Activated CD4-positive, alpha-beta T cell treated with anti-CD3 and anti-CD28 coated beads for 36 hours (primary cell): ENCODE measurements at regions of chr17 and their contacts with region 1.

Region 1: DNA sequence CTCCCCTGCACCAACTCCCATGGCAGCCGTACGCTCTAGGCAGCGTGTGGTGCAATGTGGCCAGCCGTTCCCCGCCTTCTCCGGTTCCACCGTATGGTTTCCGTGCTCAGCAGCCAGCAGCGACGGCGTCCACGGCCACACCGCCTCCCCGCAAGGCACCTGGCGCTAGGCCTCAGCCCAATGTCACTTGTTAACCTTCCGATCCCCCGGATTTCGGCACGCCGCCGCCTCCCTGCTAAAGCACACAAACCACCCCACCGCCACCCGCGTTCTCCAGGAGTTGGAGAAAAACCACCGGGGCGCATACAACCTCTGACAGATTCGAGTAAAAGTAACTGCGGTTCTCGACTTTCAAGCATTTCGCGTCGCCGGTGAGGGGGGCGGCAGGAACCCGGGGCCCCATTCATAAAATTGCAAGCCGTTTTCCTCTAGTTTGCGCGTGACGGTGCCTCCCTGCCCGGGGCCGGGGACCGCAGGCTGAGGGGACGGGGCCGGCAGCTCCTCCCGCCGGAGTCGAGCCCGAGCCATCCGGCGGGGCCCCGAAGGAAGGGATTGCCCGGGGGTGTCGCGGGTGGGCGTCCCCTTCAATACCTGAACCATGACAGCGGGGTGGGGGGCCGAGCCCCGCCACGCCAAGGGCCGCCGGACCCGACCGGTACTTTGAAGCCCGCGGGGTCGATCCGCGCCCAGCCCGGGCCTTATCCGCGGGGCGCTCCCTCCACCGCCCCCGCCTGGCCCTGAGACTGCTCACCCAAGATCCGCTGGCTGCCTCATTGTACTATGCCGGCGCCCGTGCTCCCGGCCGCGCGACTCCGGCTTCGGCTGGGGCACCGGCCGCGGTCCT is at the start of gene TEX2:
- DNase-seq: peak; percentile 78
- ATAC-seq: peak; percentile 27
- H3K4me3 Mint-ChIP-seq: peak within 1 kb of the TSS; percentile 96
- H3K27ac Mint-ChIP-seq: peak within 1 kb of the TSS; percentile 92
- H3K4me1 Mint-ChIP-seq: peaks cover 36% of the 10 kb centered on the region
- H3K27me3 Mint-ChIP-seq: no peaks in the 10 kb centered on the region
- total RNA-seq, gene TEX2: 15.2 to 15.8 TPM

Region 2: DNA sequence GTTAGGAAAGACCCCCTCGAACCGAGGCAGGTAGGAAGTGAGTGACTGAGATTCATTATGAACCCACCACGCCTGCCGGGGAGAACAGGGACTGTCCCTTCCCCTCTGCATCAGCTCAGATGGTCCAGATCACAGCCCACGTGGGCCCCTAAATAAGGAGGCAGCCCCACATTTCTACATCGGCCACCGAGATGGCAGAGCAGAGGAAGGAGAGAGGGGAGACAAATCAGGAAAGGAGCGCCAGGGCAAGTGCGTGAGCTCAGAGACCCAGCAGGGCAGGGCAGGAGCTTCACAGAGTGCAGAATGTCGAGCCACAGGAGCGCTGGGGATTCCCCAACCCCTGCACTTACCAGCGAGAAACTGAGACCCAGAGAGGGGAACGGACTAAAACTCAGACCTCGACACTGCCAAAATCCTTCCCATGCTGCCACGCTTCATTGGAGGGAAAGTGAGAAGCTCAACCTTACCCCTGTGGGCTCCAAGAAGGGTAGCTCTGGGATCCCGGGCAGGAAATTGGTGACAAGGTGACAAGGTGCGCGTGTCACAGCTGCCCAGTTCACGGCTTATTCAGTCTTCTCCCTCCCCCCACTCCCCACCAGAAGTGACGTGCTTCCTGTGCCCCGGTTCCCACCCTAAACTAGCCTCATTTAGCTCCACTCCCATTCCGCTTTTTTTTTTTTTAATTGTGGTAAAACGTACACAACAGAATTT is 242.4 kb before region 1 on chr17 and contains the start of gene ICAM2:
- CTCF ChIA-PET with region 1: no interaction called
- POLR2A ChIA-PET with region 1: interaction called, 3 read pairs
- intact Hi-C with region 1: loop called (anchors 1 kb)
- DNase-seq: peak; percentile 92
- ATAC-seq: peak; percentile 73
- H3K4me3 Mint-ChIP-seq: peak within 1 kb of the TSS; percentile 84
- H3K27ac Mint-ChIP-seq: peak within 1 kb of the TSS; percentile 97
- H3K4me1 Mint-ChIP-seq: peaks cover 68% of the 10 kb centered on the region
- H3K27me3 Mint-ChIP-seq: no peaks in the 10 kb centered on the region
- total RNA-seq, gene ICAM2: 46.6 to 49.0 TPM

Region 3: DNA sequence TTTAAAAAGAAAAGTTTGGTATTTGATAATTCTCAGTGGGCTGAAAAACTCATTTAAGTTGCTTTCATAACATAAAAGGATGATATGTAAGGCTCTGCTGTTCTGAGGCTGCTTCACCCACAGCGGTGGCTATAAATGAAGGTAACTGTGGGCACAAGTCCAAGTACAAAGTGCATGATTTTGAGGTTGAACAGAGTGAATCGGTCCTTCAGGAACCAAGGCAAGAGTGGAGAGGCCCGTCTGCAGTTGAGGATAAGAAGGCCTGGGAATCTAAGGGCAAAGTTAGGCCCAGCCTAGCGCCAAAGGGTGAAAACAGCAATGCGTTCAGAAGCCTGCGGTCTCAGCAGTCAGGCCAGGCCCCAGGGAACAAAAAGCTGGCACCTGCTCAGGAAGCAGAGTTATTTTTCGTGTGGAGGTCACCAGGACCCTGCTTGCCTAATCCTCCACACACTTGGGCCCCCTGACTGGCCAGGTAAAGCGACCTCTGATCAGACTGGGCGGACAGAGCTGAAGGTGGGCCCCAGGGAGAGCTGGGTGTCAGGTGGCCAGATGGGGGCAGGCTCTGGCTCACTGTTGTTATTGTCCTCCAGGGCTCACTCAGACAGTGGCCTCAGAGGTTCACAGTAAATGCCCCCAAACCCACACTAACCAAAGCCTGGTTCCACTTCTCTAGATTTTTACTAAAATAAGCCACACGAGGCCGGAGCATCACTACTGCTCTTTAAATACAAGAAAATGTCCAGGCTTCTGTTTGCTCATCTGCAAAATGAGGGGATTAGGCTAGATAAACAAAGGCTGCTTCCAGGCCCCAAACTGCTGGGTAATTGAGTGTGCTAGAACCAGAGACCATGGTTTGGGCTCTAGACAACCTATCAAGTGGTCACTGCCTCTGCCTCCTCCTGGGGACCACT is 46.0 kb before region 1 on chr17:
- CTCF ChIA-PET with region 1: interaction called, 3 read pairs
- POLR2A ChIA-PET with region 1: interaction called, 5 read pairs
- intact Hi-C with region 1: loop called in 1 of 2 experiments (anchors 5 kb)
- DNase-seq: no peak
- ATAC-seq: no peak
- H3K4me3 Mint-ChIP-seq: no peak overlapping the region
- H3K27ac Mint-ChIP-seq: no peak overlapping the region
- H3K4me1 Mint-ChIP-seq: peaks cover 18% of the 10 kb centered on the region
- H3K27me3 Mint-ChIP-seq: no peaks in the 10 kb centered on the region

Region 4: GRCh38 chr17:64281962-64282727 is 19.5 kb after region 1 on chr17:
- CTCF ChIA-PET with region 1: interaction called, 3 read pairs
- POLR2A ChIA-PET with region 1: no interaction called
- intact Hi-C with region 1: loop called in 1 of 2 experiments (anchors 2 kb)
- DNase-seq: peak; percentile 76
- ATAC-seq: peak; percentile 51
- H3K4me3 Mint-ChIP-seq: no peak overlapping the region
- H3K27ac Mint-ChIP-seq: no peak overlapping the region
- H3K4me1 Mint-ChIP-seq: no peaks in the 10 kb centered on the region
- H3K27me3 Mint-ChIP-seq: no peaks in the 10 kb centered on the region